Vagina (tissue), 2 donors: ENCODE measurements at regions of chr13 and their contacts with region 1.

Region 1: DNA sequence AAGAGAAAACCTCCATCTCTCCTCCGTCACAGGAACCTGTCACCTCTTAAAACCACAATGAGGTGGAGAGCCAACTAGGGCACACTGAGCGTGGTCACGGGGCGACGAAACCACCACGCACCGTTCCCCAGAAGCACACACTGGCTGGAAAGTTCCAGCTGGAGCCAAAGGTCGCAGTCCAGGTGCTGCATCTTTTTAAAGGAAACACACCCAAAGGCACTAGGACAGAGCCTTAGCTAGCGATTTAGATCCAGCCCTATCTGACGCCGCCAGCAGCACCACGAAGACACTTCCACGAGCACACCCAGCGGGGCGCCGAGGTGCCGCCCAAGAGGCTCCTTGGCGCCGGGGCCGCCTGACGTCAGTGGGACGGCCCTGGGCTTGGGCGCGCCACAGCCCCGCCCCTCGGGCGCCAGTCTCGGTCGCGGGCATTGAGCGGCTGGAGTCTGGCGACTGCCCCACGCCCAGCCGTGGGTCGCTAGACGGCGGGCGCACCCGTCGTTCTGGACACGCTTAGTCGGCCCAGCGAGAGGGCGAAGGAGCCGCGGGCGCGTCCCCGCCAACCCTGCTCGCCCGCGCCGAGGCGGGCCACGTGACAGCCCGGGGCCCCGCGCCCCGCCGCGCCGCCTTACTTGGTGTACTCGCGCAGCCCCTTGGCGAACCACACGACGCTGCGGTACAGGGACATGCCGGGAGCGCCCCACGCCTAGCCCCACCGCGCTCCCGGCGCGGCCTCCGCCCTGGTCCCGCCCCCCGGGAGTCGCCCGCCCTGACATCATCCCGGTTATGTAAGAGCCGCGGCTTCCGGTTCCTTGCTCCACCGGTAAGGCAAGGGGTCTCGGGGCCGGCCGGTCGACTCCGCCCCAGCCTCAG is at the start of gene DHRS12:
- DNase-seq: peak in 1 of 2 donors; percentile 95
- H3K4me3 ChIP-seq: peak within 1 kb of the TSS; percentile 61 to 97
- H3K27ac ChIP-seq: peak within 1 kb of the TSS; percentile 100
- H3K4me1 ChIP-seq: peaks cover 38% of the 10 kb centered on the region
- H3K27me3 ChIP-seq: no peaks in the 10 kb centered on the region
- CTCF ChIP-seq: no peak
- POLR2A ChIP-seq: peak; percentile 39 to 78
- total RNA-seq, gene DHRS12: 12.5 TPM

Region 2: DNA sequence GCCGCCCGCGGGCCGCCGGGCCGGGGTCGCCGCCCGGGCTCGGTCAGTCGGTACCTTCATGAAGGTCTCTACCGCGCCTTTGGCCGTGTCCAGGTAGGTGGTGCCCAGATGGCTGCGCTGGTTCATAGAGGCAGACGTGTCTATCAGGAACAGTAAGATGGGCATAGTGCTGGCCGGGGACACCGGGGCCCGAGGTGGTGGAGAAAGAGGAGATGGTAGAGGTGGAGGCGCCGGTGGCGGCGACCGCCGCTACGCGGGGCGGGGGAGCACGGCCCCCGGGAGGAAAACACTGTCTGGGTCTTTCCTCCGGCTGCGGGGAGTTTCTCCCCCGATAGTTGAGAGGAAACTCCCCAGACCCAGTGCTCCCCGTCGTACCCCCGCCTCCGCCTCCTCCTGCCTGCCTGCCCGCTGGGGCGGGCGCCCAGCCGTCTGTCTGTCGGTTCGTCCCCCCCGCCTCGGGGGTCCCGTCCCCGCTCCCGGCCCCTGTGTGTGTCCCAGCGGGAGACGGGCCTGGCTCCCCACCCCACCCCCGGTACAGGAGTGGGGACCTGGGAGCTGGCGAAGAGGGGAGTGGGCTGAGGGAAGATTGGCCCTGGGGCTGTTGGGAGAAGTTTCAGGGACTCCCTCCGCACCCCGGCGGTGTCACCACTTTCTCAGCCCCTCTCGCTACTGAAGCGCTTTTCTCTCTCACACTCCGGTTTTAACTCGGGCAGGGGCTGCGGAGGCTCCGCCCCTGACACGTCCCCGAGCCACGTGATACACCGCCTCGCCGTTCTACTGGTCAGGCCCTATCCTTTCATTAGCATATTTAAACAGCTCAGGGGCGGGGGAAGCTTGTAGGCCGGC is 351.1 kb before region 1 on chr13 and contains the start of gene INTS6:
- intact Hi-C with region 1: loop called (anchors 2 kb)
- DNase-seq: peak; percentile 100
- H3K4me3 ChIP-seq: peak within 1 kb of the TSS; percentile 94 to 99
- H3K27ac ChIP-seq: peak within 1 kb of the TSS; percentile 100
- H3K4me1 ChIP-seq: peaks cover 28% of the 10 kb centered on the region
- H3K27me3 ChIP-seq: no peaks in the 10 kb centered on the region
- CTCF ChIP-seq: no peak
- POLR2A ChIP-seq: peak; percentile 90 to 100
- total RNA-seq, gene INTS6: 56.2 TPM